OCI-LY7 (cell line): ENCODE measurements at regions of chr7 and their contacts with region 1.

Region 1: GRCh38 chr7:6323967-6324701 is 51.7 kb upstream of the CYTH3 start:
- DNase-seq: no peak
- H3K4me3 ChIP-seq: no peak overlapping the region
- H3K27ac ChIP-seq: no peak overlapping the region
- H3K4me1 ChIP-seq: no peaks in the 10 kb centered on the region
- CTCF ChIP-seq: no peak

Region 2: DNA sequence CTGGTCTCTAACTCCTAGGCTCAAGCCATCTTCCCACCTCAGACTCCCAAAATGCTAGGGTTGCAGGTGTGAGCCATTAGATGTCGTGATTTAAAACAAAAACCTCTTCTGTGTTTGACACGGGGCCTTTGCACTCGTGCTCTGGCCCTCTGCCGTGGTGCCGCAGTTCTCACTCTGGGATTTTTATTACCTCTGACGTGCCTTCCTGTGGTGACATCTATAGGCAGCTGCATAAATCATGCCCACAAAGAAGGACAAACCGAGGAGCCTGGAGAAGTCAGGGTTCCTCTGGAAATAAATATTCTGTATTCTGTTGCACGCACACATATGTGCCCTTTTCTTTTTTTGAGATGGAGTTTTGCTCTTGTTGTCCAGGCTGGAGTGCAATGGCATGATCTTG is 469.4 kb before region 1 on chr7:
- CTCF ChIA-PET with region 1: no interaction called
- POLR2A ChIA-PET with region 1: no interaction called
- intact Hi-C with region 1: loop called (anchors 5 kb)
- DNase-seq: no peak
- H3K4me3 ChIP-seq: no peak overlapping the region
- H3K27ac ChIP-seq: no peak overlapping the region
- H3K4me1 ChIP-seq: no peaks in the 10 kb centered on the region
- CTCF ChIP-seq: no peak

Region 3: DNA sequence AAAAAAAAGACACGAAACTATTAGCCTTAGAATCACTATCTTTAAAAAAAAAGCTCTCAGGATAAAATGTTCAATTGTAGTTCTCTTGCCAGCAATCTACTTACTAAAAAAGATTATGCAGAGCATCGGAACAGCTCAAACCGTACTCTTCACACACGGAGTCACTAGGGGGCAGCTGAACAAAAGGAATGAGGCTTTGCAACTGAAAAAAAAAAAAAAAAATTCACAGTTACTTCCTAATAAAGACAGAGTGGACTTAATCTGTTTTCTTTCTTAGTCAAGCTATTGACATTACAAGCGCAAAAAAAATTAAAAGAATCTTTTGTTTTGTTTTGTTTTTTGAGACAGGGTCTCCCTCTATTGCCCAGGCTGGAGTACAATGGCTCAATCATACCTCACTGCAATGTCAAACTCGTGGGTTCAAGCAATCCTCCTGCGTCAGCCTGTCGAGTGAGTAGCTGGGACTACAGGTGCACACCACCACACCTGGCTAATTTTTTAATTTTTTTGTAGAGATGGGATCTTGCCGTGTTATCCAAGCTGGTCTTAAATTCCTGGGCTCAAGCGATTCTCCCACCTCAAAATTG is 326.8 kb before region 1 on chr7:
- CTCF ChIA-PET with region 1: no interaction called
- POLR2A ChIA-PET with region 1: no interaction called
- intact Hi-C with region 1: loop called (anchors 1 kb)
- DNase-seq: peak; percentile 75
- H3K4me3 ChIP-seq: no peak overlapping the region
- H3K27ac ChIP-seq: no peak overlapping the region
- H3K4me1 ChIP-seq: no peaks in the 10 kb centered on the region
- CTCF ChIP-seq: peak; percentile 91

Region 4: DNA sequence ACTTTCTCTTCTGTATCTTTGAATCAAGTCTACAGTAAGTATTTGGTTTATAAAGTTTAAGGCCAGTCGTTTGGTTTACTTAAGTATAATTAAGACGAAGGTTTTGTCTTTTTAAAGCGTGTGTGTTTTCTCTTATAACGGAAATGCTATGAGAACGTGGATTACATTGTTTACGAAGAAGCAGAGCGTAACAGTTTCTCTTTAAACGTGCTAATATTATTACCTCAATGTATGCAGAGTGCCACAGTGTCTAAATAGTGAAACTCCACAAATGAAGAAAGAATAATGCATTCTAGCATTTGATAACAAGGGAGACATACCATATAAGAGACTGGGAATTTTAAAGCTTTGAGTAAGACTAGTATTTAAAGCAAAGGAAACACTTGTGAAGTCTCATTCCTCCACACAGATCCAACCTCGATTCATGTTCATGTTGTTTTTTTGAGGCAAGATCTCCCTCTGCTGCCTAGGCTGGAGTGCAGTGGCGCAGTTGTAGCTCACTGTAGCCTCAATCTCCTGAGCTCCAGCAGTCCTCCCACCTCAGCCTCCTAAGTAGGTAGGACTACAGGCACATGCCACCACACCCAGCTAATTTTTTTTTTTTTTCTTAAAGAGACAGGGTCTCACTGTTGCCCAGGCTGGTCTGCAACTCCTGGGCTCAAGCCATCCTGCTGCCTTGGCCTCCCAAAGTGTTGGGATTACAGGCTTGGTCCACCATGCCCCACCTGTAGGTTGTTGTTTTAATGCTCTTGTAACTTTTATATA is 217.8 kb before region 1 on chr7:
- CTCF ChIA-PET with region 1: no interaction called
- POLR2A ChIA-PET with region 1: no interaction called
- intact Hi-C with region 1: loop called (anchors 2 kb)
- DNase-seq: peak; percentile 70
- H3K4me3 ChIP-seq: peak overlapping the region; percentile 92
- H3K27ac ChIP-seq: peak overlapping the region; percentile 40
- H3K4me1 ChIP-seq: peaks cover 23% of the 10 kb centered on the region
- CTCF ChIP-seq: peak; percentile 74

Region 5: GRCh38 chr7:6160191-6160623 is 163.9 kb before region 1 on chr7:
- CTCF ChIA-PET with region 1: no interaction called
- POLR2A ChIA-PET with region 1: no interaction called
- intact Hi-C with region 1: loop called (anchors 5 kb)
- DNase-seq: no peak
- H3K4me3 ChIP-seq: no peak overlapping the region
- H3K27ac ChIP-seq: no peak overlapping the region
- H3K4me1 ChIP-seq: peaks cover 6% of the 10 kb centered on the region
- CTCF ChIP-seq: peak; percentile 60